ENCODE measurements at regions of chr9 and their contacts with region 1.

Region 1: DNA sequence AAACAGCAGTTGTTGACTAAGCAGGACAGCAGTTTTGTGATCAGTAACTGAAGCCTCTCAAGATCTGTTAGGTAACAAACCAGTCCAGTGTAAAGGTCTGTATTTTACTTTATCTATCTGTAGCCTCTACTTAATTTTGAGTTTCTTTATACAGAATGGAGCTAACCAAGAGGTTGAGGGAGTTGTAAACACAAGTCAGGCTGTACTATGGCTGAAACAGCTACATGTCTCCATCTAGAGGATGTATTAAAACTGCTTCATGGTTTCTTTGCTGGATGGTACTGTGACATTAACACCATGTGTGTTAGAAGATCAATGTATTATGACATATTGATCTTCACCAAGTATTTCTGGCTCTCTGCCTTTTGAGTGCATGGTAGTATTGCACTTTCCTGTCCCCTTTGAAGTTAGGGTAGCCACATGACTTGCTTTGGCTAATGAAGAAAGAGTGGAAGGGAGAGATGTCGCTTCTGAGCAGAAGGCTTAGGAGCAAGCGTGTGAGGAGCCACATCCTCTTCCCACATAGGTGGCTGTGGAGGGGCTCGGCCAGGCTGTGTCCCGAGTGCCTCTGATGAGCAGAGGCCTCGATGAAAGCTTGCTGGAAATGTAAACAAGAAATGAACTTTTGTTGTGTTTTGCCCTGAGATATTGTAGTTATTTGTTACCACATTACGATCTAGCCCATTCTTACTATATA is 105.6 kb upstream of the PCA3 start:
- DNase-seq: no peak
- H3K4me3 Mint-ChIP-seq: no peak overlapping the region
- H3K27ac Mint-ChIP-seq: no peak overlapping the region
- H3K4me1 Mint-ChIP-seq: peaks cover 44% of the 10 kb centered on the region
- H3K27me3 Mint-ChIP-seq: peaks cover 2% of the 10 kb centered on the region

Region 2: DNA sequence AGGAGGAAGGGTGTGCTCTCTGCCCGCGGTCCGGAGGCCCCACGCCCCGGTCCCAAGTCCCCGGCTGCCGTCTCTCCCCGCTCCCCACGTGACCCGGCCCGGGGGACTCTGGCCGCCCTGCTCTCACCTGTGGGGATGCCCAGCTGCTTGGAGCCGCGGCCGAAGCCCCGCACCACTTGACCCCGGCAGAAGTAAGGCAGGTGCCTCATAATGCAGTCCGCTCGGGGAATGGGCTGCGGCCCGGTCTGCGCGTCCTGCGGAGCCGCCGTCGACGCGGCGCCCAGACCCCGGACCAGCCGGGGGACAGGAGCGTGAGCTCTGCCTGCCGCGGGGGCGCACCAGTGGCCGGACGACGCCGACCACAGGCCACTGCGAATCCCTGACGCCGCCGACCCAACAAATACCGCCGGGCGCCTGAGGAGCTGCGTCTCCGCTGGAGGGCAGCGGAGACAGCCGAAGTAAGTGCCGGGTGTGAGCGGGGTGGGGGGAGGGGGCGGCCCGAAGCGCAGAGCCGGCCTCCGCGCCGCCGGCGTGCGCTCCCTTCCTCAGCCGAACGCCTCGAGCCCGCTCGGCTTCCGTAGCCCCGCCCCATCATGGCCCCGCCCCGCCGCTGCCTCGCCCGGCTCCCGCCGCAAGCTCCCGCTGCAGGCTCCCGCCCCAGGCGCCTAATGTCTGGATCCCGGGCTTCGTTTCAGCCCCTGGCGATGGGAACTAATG is 264.6 kb before region 1 on chr9 and contains the start of gene RFK:
- intact Hi-C with region 1: loop called (anchors 2 kb)
- DNase-seq: peak; percentile 89
- H3K4me3 Mint-ChIP-seq: peak within 1 kb of the TSS; percentile 100
- H3K27ac Mint-ChIP-seq: peak within 1 kb of the TSS; percentile 100
- H3K4me1 Mint-ChIP-seq: peaks cover 26% of the 10 kb centered on the region
- H3K27me3 Mint-ChIP-seq: no peaks in the 10 kb centered on the region
- total RNA-seq, gene RFK: 14.9 and 17.1 TPM in 2 replicates

Region 3: GRCh38 chr9:76441551-76442322 is 216.9 kb before region 1 on chr9:
- intact Hi-C with region 1: loop called (anchors 1 kb)
- DNase-seq: peak; percentile 19
- H3K4me3 Mint-ChIP-seq: peak overlapping the region; percentile 88
- H3K27ac Mint-ChIP-seq: peak overlapping the region; percentile 99
- H3K4me1 Mint-ChIP-seq: peaks cover 65% of the 10 kb centered on the region
- H3K27me3 Mint-ChIP-seq: no peaks in the 10 kb centered on the region

Region 4: DNA sequence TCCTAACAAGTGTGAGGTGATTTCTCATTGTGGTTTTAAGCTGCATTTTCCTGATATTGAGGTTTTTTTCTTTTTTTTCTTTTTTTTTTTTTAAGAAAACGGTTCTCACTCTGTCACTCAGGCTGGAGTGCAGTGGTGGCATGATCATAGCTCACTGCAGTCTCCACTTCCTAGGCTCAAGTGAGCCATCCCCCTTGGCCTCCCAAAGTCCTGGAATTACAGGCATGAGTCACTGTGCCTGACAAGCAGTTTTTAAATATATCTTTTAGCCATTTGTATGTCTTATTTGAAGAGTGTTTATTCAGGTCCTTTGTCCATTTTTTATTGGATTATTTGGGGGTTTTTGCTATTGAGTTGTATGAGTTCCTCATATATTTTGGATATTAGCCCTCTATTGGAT is 145.9 kb before region 1 on chr9:
- intact Hi-C with region 1: loop called (anchors 5 kb)
- DNase-seq: no peak
- H3K4me3 Mint-ChIP-seq: no peak overlapping the region
- H3K27ac Mint-ChIP-seq: no peak overlapping the region
- H3K4me1 Mint-ChIP-seq: peaks cover 13% of the 10 kb centered on the region
- H3K27me3 Mint-ChIP-seq: peaks cover 11% of the 10 kb centered on the region

Region 5: GRCh38 chr9:76576344-76576743 is 82.3 kb before region 1 on chr9:
- intact Hi-C with region 1: loop called (anchors 2 kb)
- DNase-seq: peak; percentile 57
- H3K4me3 Mint-ChIP-seq: no peak overlapping the region
- H3K27ac Mint-ChIP-seq: peak overlapping the region; percentile 73
- H3K4me1 Mint-ChIP-seq: peaks cover 29% of the 10 kb centered on the region
- H3K27me3 Mint-ChIP-seq: peaks cover 5% of the 10 kb centered on the region

Measured in activated T-helper 2 cell treated with anti-CD3 and anti-CD28 coated beads, Interferon-gamma antibody, Interleukin-2, Interleukin-4, amounts not matched to agents 10 μg/mL and 5 μg/mL and 100 μg/mL, durations not matched to agents 14 hours and 24 hours and 36 hours (primary cell).